Activated B cell treated with CpG ODN at 0.5 μM for 24 hours (primary cell): ENCODE measurements at regions of chr6 and their contacts with region 1.

Region 1: DNA sequence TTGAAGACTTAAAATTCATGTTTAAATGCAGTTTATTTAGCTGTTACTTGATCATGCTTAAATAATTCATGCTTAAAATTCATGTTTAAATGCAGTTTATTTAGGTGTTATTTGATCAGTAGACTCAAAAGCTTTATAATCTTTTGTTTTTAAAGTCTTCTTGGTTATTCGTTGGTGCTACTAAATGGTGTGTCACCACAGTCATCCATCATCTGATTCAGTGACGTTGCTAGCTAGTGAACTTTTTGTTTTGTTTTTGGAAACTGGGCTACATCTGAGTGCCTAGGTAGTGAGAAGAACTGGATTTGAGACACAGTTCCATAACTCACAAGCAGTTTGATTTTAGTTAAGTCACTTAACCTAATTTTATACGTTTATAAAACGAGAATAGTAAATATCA is 20.9 kb downstream of the SCAF8 start:
- DNase-seq: no peak
- ATAC-seq: no peak
- H3K4me3 Mint-ChIP-seq: no peak overlapping the region
- H3K27ac Mint-ChIP-seq: no peak overlapping the region
- H3K4me1 Mint-ChIP-seq: peaks cover 70% of the 10 kb centered on the region
- H3K27me3 Mint-ChIP-seq: no peaks in the 10 kb centered on the region
- CTCF ChIP-seq: no peak

Region 2: GRCh38 chr6:154738551-154738961 is 15.6 kb before region 1 on chr6:
- CTCF ChIA-PET with region 1: no interaction called
- POLR2A ChIA-PET with region 1: interaction called, 5 read pairs
- intact Hi-C with region 1: loop called (anchors 2 kb)
- DNase-seq: no peak
- ATAC-seq: no peak
- H3K4me3 Mint-ChIP-seq: no peak overlapping the region
- H3K27ac Mint-ChIP-seq: no peak overlapping the region
- H3K4me1 Mint-ChIP-seq: peaks cover 76% of the 10 kb centered on the region
- H3K27me3 Mint-ChIP-seq: no peaks in the 10 kb centered on the region
- CTCF ChIP-seq: no peak

Region 3: GRCh38 chr6:154767003-154767723 is 13.0 kb after region 1 on chr6:
- CTCF ChIA-PET with region 1: no interaction called
- POLR2A ChIA-PET with region 1: no interaction called
- intact Hi-C with region 1: loop called (anchors 2 kb)
- DNase-seq: no peak
- ATAC-seq: no peak
- H3K4me3 Mint-ChIP-seq: no peak overlapping the region
- H3K27ac Mint-ChIP-seq: no peak overlapping the region
- H3K4me1 Mint-ChIP-seq: peaks cover 79% of the 10 kb centered on the region
- H3K27me3 Mint-ChIP-seq: no peaks in the 10 kb centered on the region
- CTCF ChIP-seq: no peak

Region 4: DNA sequence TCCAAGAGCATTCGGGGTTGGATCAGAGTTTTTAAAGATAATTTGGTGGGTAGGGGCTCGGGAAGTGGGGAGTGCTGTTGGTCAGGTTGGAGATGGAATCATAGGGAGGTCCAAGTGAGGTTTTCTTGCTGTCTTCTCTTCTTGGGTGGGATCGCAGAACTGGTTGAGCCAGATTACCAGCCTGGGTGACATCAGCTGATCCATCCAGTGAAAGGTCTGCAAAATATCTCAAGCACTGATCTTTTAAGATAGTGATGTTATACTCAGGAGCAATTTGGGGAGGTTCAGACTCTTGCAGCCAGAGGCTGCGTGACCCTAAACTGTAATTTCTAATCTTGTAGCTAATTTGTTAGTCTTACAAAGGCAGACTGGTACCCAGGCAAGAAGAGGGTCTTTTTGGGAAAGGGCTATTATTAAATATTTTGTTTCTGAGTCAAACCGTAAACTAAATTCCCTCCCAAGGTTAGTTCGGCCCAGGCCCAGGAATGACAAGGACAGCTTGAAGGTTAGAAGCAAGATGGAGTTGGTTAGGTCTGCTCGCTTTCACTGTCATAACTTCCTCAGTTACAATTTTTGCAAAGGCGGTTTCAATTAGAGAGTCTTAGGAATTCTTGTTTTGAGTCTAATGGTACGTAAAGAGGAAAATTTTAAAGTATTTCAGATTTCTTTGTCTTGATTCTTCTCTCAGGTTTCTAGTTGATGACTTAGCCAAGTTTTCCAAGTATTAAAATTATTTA is 32.1 kb after region 1 on chr6:
- CTCF ChIA-PET with region 1: no interaction called
- POLR2A ChIA-PET with region 1: no interaction called
- intact Hi-C with region 1: loop called (anchors 5 kb)
- DNase-seq: no peak
- ATAC-seq: no peak
- H3K4me3 Mint-ChIP-seq: no peak overlapping the region
- H3K27ac Mint-ChIP-seq: no peak overlapping the region
- H3K4me1 Mint-ChIP-seq: peaks cover 4% of the 10 kb centered on the region
- H3K27me3 Mint-ChIP-seq: no peaks in the 10 kb centered on the region
- CTCF ChIP-seq: no peak

Region 5: DNA sequence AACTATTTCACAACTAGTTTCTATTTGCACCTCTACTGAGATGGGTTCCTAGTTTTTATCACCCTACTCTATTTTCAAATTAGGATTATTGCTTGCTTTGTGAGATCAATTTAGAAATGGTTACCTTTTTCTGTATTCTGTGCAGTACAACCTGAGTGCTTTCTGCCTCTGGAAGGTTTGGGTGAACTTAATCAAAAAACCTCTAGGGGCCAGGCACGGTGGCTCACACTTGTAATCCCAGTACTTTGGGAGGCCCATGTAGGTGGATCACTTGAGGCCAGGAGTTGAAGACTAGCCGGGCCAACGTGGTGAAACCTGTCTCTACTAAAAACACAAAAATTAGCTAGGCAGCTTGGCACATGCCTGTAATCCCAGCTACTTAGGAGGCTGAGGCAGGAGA is 42.3 kb after region 1 on chr6:
- CTCF ChIA-PET with region 1: no interaction called
- POLR2A ChIA-PET with region 1: no interaction called
- intact Hi-C with region 1: no loop called
- DNase-seq: no peak
- ATAC-seq: no peak
- H3K4me3 Mint-ChIP-seq: no peak overlapping the region
- H3K27ac Mint-ChIP-seq: peak overlapping the region; percentile 59
- H3K4me1 Mint-ChIP-seq: peaks cover 28% of the 10 kb centered on the region
- H3K27me3 Mint-ChIP-seq: no peaks in the 10 kb centered on the region
- CTCF ChIP-seq: no peak